AG04449 (cell line): ENCODE measurements at regions of chr10 and their contacts with region 1.

Region 1: DNA sequence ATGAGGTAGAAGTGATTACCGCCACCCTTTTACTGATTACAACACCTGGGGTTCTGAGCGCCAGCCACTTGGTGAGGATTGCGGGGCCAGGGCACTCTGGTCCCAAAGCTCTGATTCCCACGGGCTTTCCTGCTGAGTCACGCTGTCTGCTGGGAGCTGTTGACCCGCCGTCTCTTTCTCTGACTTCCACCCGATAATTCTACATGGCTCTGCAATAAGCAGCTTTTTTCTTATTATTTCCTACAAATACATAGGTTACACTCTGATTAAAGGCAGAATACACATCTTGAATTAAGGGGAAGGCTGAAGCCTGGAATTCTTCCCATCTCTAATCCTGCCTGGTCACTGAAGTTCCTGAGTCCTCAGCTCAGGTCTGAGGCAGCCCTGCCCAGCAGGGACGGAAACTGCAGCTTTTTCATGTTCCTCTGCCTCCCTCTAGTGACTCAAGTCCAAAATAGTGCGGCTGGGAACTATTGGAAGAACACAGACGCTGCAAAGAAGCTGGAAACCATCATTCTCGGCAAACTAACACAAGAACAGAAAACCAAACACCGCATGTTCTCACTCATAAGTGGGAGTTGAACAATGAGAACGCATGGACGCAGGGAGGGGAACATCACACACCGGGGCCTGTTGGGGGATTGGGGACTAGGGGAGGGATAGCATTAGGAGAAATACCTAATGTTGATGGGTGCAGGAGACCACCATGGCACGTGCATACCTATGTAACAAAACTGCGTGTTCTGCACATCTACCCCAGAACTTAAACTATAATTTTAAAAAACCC is 178.3 kb downstream of the PRKCQ start:
- DNase-seq: peak; percentile 70
- H3K4me3 ChIP-seq: peak overlapping the region; percentile 39
- CTCF ChIP-seq: peak; percentile 80

Region 2: GRCh38 chr10:6083523-6084475 is 318.0 kb before region 1 on chr10:
- CTCF ChIA-PET with region 1: interaction called, 155 read pairs
- POLR2A ChIA-PET with region 1: interaction called, 3 read pairs
- DNase-seq: no peak
- H3K4me3 ChIP-seq: no peak overlapping the region
- CTCF ChIP-seq: no peak

Region 3: DNA sequence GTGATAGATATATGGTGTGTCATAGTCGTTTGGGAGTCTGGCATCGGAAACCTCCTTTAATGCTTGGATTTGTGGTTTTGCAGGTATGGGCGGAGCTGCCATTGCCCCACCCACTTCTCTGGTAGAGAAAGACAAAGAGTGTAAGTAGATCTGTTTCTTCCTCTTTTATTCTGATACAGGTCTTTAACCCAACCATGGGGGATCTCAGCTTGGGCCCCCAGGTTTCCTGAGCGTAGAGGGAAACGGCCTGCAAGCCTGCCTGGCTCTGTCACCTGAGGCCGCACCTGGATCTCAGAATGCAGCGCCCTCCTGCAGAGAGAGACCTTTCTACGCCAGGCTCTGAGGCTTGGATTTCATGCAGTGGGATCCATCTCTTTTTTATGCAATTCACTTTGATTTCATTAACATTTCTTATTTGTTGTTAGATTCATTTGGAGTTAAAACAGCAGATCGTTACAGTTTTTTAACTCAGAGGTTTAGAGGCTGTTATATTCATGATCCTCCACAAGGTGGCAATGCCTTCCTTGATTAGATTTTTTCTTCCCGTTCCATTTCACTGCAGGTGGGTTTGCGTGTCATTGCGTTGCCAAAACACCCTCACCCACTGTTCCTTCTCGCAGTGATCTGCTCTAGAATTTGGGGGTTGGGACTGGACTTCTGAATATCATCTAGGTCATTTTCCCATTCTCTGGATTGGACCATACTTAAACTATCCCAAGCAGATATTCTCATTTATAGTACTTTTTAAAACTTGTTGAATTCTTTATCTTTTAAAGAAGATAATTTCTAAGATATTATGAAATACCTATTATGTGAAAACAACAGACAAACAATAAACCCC is 292.9 kb before region 1 on chr10:
- CTCF ChIA-PET with region 1: interaction called, 132 read pairs
- POLR2A ChIA-PET with region 1: no interaction called
- DNase-seq: no peak
- H3K4me3 ChIP-seq: no peak overlapping the region
- CTCF ChIP-seq: peak; percentile 30

Region 4: GRCh38 chr10:6158276-6158675 is 243.5 kb before region 1 on chr10:
- CTCF ChIA-PET with region 1: interaction called, 13 read pairs
- POLR2A ChIA-PET with region 1: no interaction called
- DNase-seq: no peak
- H3K4me3 ChIP-seq: no peak overlapping the region
- CTCF ChIP-seq: no peak

Region 5: GRCh38 chr10:6195846-6196245 is 205.9 kb before region 1 on chr10:
- CTCF ChIA-PET with region 1: interaction called, 278 read pairs
- POLR2A ChIA-PET with region 1: interaction called, 201 read pairs
- DNase-seq: no peak
- H3K4me3 ChIP-seq: no peak overlapping the region
- CTCF ChIP-seq: no peak

Region 6: GRCh38 chr10:6236361-6237198 is 165.2 kb before region 1 on chr10:
- CTCF ChIA-PET with region 1: interaction called, 10 read pairs
- POLR2A ChIA-PET with region 1: no interaction called
- DNase-seq: no peak
- H3K4me3 ChIP-seq: no peak overlapping the region
- CTCF ChIP-seq: no peak

Region 7: DNA sequence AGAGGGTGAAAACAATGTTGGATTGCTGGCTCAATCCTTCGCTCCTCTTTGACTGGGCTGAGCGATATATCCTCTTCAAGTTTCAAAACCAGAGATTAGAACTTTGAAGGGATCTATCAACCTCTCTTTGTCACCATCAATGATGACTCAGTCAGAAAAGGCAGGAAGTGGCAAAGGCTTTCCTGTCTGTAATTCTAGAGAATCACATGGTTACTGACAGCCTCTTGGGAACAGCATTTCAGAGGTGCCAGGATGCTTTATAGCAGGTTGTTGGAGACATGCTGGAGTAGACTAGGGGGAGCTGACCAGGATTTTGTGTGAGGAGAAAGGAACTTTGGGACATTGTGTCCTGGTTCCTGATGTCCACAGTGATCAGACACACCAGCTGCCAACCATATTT is 97.0 kb after region 1 on chr10:
- CTCF ChIA-PET with region 1: no interaction called
- POLR2A ChIA-PET with region 1: no interaction called
- DNase-seq: no peak
- H3K4me3 ChIP-seq: no peak overlapping the region
- CTCF ChIP-seq: no peak

Region 8: GRCh38 chr10:6688661-6689435 is 287.1 kb after region 1 on chr10:
- CTCF ChIA-PET with region 1: no interaction called
- POLR2A ChIA-PET with region 1: no interaction called
- DNase-seq: no peak
- H3K4me3 ChIP-seq: no peak overlapping the region
- CTCF ChIP-seq: no peak